IMR-90 (cell line): ENCODE measurements at regions of chr1 and their contacts with region 1.

Region 1: GRCh38 chr1:116835910-116836498 is 73.7 kb upstream of the PTGFRN start:
- DNase-seq: no peak
- ATAC-seq: no peak
- H3K4me3 ChIP-seq: no peak overlapping the region
- H3K27ac ChIP-seq: no peak overlapping the region
- H3K4me1 ChIP-seq: no peaks in the 10 kb centered on the region
- H3K27me3 ChIP-seq: peaks cover 5% of the 10 kb centered on the region; the same call in 1 of the 2 replicates
- CTCF ChIP-seq: no peak
- POLR2A ChIP-seq: no peak
- RAD21 ChIP-seq: no peak

Region 2: DNA sequence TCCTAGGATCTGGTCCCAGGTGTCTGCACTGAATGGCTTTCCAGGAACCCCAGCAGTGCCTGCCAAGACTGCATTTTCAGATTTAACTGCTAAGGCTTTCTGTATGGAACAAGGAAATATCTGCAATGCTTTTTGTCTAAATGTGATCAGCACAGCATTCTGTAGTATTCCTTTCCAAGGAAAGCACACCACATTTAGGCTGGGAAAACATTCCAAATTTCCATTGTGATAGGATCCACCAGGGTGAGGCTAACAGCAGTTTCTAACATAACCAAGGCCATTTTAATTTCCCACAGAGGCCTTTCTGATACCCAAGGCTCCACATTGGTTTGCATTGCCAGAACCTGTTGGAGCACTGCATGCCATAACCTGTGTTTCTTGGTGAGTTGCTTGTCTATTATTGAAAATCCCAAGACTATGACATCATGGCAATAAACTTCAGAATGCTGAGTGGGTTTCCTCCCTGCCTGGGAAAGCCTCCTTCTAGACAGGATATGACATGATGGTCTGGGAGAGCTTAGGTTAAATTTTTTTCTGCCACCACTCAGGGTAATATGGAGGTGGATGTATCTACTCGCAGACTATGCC is 50.4 kb after region 1 on chr1:
- CTCF ChIA-PET with region 1: no interaction called
- POLR2A ChIA-PET with region 1: no interaction called
- dilution Hi-C with region 1: no loop called
- in situ Hi-C with region 1: loop called (anchors 5 kb)
- intact Hi-C with region 1: no loop called
- DNase-seq: peak; percentile 18
- ATAC-seq: no peak
- H3K4me3 ChIP-seq: no peak overlapping the region
- H3K27ac ChIP-seq: no peak overlapping the region
- H3K4me1 ChIP-seq: peaks cover 3% of the 10 kb centered on the region; the same call in 1 of the 2 replicates
- H3K27me3 ChIP-seq: no peaks in the 10 kb centered on the region
- CTCF ChIP-seq: no peak
- POLR2A ChIP-seq: no peak
- RAD21 ChIP-seq: no peak